Breast epithelium (tissue), 4 donors: ENCODE measurements at regions of chr2 and their contacts with region 1.

Region 1: GRCh38 chr2:179524809-179525339 is 260.2 kb upstream of the SESTD1 start:
- DNase-seq: no peak
- H3K4me3 ChIP-seq: no peak overlapping the region
- H3K27ac ChIP-seq: no peak overlapping the region
- H3K4me1 ChIP-seq: no peaks in the 10 kb centered on the region
- H3K27me3 ChIP-seq: no peaks in the 10 kb centered on the region
- CTCF ChIP-seq: no peak
- POLR2A ChIP-seq: no peak

Region 2: DNA sequence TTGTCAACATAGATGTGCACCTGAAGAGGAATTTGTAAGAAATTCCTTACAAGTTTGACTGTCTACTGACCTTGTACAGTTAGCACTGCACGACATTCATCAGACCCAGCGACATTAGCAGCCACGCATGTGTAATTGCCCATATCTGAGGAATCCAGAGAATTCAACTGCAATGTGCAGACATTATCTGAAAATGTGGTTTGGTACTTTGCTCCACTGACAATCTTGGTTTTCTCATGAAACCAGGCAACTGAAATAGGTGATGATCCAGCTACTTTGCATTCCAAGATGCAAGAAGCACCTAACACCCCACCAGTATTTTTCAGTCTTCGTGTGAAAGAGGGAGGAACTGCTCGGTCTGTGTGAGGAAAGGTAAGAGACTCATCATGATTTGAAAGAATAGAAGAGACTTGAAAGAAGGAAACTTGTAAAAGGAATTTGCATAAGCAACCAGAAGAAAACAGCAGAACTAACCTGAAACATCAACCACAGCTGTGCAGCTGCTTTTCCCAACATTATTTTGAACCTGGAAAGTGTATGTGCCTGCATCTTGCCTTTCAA is 801.0 kb before region 1 on chr2:
- intact Hi-C with region 1: loop called (anchors 5 kb)
- DNase-seq: no peak
- H3K4me3 ChIP-seq: no peak overlapping the region
- H3K27ac ChIP-seq: no peak overlapping the region
- H3K4me1 ChIP-seq: no peaks in the 10 kb centered on the region
- H3K27me3 ChIP-seq: no peaks in the 10 kb centered on the region
- CTCF ChIP-seq: no peak
- POLR2A ChIP-seq: no peak